Right cardiac atrium (tissue), 5 donors: ENCODE measurements at regions of chr1 and their contacts with region 1.

Region 1: DNA sequence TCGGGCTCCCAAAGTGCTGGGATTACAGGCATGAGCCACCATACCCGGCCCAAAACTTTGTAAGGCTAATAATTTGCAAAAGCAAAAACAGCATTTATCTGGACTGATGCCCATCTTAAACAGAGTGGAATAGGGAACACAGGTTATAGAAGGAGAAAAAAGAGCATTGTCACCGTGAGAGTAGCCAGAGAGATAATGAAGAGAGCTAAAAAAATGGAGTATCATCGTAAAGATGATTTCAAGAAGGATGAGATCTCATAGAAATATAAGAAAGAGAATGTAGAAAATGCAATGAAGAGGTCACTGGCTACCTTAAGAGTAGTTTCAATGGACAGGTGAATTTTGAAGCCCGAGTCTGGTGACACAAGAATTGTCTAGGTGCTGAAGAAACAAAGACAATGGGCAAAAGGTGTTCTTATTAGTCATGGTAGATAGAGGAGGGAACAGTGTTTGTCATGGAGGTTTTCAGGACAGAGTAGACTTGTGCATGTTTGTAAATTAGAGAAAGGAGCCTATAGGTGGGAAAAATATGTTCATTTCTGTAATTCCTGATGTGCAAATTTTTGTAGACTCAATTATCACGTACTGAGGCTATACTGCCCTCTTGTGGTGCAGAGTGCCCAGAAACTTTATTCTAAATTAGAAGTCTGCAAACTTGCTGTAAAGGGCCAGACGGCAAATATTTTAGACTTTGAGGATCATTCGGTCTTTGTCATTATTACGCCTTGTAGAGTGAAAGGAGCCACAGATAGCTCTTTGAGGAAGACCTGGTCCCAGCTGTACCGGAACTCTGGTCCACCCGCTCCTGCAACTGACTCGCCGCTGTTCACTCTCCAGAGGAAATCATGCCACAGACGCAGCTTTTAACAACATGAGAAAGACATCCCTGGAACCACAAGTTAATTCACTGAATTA is 8.1 kb upstream of the TMEM183A start:
- DNase-seq: peak in 2 of 3 donors; percentile 21 to 47
- ATAC-seq: no peak
- H3K4me3 ChIP-seq: no peak overlapping the region
- H3K27ac ChIP-seq: no peak overlapping the region
- H3K4me1 ChIP-seq: no peaks in the 10 kb centered on the region
- H3K27me3 ChIP-seq: no peaks in the 10 kb centered on the region

Region 2: GRCh38 chr1:202926720-202927491 is 72.2 kb before region 1 on chr1 and contains the start of gene KLHL12:
- intact Hi-C with region 1: loop called in 2 of 4 experiments (anchors 5 kb)
- DNase-seq: peak; percentile 97 to 99 (median 99)
- ATAC-seq: peak; percentile 99
- H3K4me3 ChIP-seq: peak within 1 kb of the TSS; percentile 88
- H3K27ac ChIP-seq: peak within 1 kb of the TSS; percentile 96
- H3K4me1 ChIP-seq: no peaks in the 10 kb centered on the region
- H3K27me3 ChIP-seq: no peaks in the 10 kb centered on the region
- total RNA-seq, gene KLHL12: 16.8 to 21.4 (median 20.1) TPM